ENCODE measurements at regions of chr1 and their contacts with region 1.

Region 1: GRCh38 chr1:247331172-247331991 is at the start of gene ZNF496:
- DNase-seq: peak; percentile 97
- H3K4me3 Mint-ChIP-seq: peak within 1 kb of the TSS; percentile 93
- H3K27ac Mint-ChIP-seq: peak within 1 kb of the TSS; percentile 90
- H3K4me1 Mint-ChIP-seq: peaks cover 36% of the 10 kb centered on the region
- H3K27me3 Mint-ChIP-seq: no peaks in the 10 kb centered on the region
- CTCF ChIP-seq: no peak
- total RNA-seq, gene ZNF496: 58.0 and 67.2 TPM in 2 replicates

Region 2: GRCh38 chr1:246931549-246932365 is 399.6 kb before region 1 on chr1 and contains the start of gene AHCTF1:
- CTCF ChIA-PET with region 1: no interaction called
- POLR2A ChIA-PET with region 1: interaction called, 16 read pairs
- intact Hi-C with region 1: loop called (anchors 1 kb)
- DNase-seq: peak; percentile 100
- H3K4me3 Mint-ChIP-seq: peak within 1 kb of the TSS; percentile 88
- H3K27ac Mint-ChIP-seq: peak within 1 kb of the TSS; percentile 95
- H3K4me1 Mint-ChIP-seq: peaks cover 29% of the 10 kb centered on the region
- H3K27me3 Mint-ChIP-seq: no peaks in the 10 kb centered on the region
- CTCF ChIP-seq: no peak
- total RNA-seq, gene AHCTF1: 79.5 and 112 TPM in 2 replicates

Region 3: GRCh38 chr1:247078261-247079140 is 252.9 kb before region 1 on chr1 and contains the start of gene ZNF670:
- CTCF ChIA-PET with region 1: interaction called, 3 read pairs
- POLR2A ChIA-PET with region 1: interaction called, 12 read pairs
- intact Hi-C with region 1: no loop called
- DNase-seq: peak; percentile 100
- H3K4me3 Mint-ChIP-seq: peak within 1 kb of the TSS; percentile 78
- H3K27ac Mint-ChIP-seq: peak within 1 kb of the TSS; percentile 92
- H3K4me1 Mint-ChIP-seq: peaks cover 18% of the 10 kb centered on the region
- H3K27me3 Mint-ChIP-seq: no peaks in the 10 kb centered on the region
- CTCF ChIP-seq: no peak
- total RNA-seq, gene ZNF670: 7.1 and 7.7 TPM in 2 replicates

Region 4: GRCh38 chr1:247210376-247211117 is 120.8 kb before region 1 on chr1:
- CTCF ChIA-PET with region 1: interaction called, 3 read pairs
- POLR2A ChIA-PET with region 1: interaction called, 53 read pairs
- intact Hi-C with region 1: loop called (anchors 1 kb)
- DNase-seq: peak; percentile 99
- H3K4me3 Mint-ChIP-seq: peak overlapping the region; percentile 98
- H3K27ac Mint-ChIP-seq: peak overlapping the region; percentile 98
- H3K4me1 Mint-ChIP-seq: peaks cover 23% of the 10 kb centered on the region
- H3K27me3 Mint-ChIP-seq: peaks cover 25% of the 10 kb centered on the region
- CTCF ChIP-seq: no peak

Region 5: DNA sequence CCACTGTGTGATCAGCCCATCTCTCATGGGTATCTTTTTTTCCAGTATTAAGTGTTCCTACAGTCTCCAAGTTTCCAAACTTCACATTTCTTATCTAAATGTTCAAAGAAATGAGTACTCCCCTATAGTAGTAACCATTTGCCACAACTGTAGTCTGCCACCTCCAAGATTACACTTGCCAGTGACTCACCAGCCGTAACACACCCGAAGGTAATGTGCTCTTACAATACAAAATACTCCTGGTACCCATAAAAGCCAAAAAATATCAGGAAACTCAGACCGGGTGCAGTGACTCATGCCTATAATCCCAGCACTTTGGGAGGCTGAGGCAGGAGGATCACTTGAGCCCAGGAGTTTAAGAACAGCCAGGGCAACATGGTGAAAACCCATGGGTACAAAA is 20.8 kb after region 1 on chr1:
- CTCF ChIA-PET with region 1: interaction called, 4 read pairs
- POLR2A ChIA-PET with region 1: interaction called, 10 read pairs
- intact Hi-C with region 1: no loop called
- DNase-seq: peak; percentile 55
- H3K4me3 Mint-ChIP-seq: no peak overlapping the region
- H3K27ac Mint-ChIP-seq: no peak overlapping the region
- H3K4me1 Mint-ChIP-seq: peaks cover 12% of the 10 kb centered on the region
- H3K27me3 Mint-ChIP-seq: no peaks in the 10 kb centered on the region
- CTCF ChIP-seq: no peak

Region 6: GRCh38 chr1:247465796-247466195 is 134.4 kb after region 1 on chr1:
- CTCF ChIA-PET with region 1: no interaction called
- POLR2A ChIA-PET with region 1: no interaction called
- intact Hi-C with region 1: no loop called
- DNase-seq: no peak
- H3K4me3 Mint-ChIP-seq: no peak overlapping the region
- H3K27ac Mint-ChIP-seq: no peak overlapping the region
- H3K4me1 Mint-ChIP-seq: no peaks in the 10 kb centered on the region
- H3K27me3 Mint-ChIP-seq: no peaks in the 10 kb centered on the region
- CTCF ChIP-seq: no peak